ENCODE measurements at regions of chr18 and their contacts with region 1.

Region 1: GRCh38 chr18:30730915-30731314 is 311.6 kb downstream of the DSC3 start:
- DNase-seq: no peak
- H3K4me3 ChIP-seq: no peak overlapping the region
- H3K27ac ChIP-seq: no peak overlapping the region
- H3K4me1 ChIP-seq: no peaks in the 10 kb centered on the region
- H3K27me3 ChIP-seq: no peaks in the 10 kb centered on the region
- CTCF ChIP-seq: no peak
- POLR2A ChIP-seq: no peak

Region 2: GRCh38 chr18:30658306-30658705 is 72.6 kb before region 1 on chr18:
- intact Hi-C with region 1: loop called (anchors 5 kb)
- DNase-seq: no peak
- H3K4me3 ChIP-seq: no peak overlapping the region
- H3K27ac ChIP-seq: no peak overlapping the region
- H3K4me1 ChIP-seq: no peaks in the 10 kb centered on the region
- H3K27me3 ChIP-seq: no peaks in the 10 kb centered on the region
- CTCF ChIP-seq: no peak
- POLR2A ChIP-seq: no peak

Measured in esophagus squamous epithelium (tissue), 5 donors.